Posterior vena cava (tissue), 2 donors: ENCODE measurements at regions of chr12 and their contacts with region 1.

Region 1: GRCh38 chr12:119082496-119082895 is 96.2 kb upstream of the HSPB8 start:
- DNase-seq: no peak

Region 2: GRCh38 chr12:119130523-119130922 is 48.0 kb after region 1 on chr12:
- intact Hi-C with region 1: loop called in 1 of 2 experiments (anchors 2 kb)
- DNase-seq: no peak